ENCODE measurements at regions of chr19 and their contacts with region 1.

Region 1: GRCh38 chr19:48271531-48272151 is 1.8 kb downstream of the ZNF114 start:
- DNase-seq: peak; percentile 66 to 75
- H3K4me3 ChIP-seq: peak overlapping the region; percentile 79
- H3K27ac ChIP-seq: peak overlapping the region; percentile 99
- H3K4me1 ChIP-seq: peaks cover 25% of the 10 kb centered on the region
- H3K27me3 ChIP-seq: no peaks in the 10 kb centered on the region
- CTCF ChIP-seq: no peak

Region 2: DNA sequence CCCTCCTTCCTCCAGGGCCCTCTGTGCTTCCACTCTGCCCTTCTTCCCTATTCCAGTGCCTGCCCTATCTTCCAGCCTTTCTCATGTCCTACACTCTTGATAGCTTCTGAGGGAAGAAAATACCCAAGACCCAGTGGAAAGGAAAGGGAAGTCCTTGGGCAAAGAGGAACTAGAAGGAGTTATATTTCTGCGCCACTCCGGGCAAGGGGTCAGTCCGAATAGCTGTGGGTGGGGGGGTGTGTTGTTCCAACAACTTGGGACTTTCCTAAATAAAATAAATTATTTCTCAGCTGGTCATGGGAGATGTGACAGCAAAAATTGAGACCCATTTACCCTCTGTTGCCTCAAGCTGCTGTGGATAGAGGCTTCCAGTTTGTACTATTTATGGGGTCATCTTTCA is 251.0 kb before region 1 on chr19:
- CTCF ChIA-PET with region 1: interaction called, 16 read pairs
- POLR2A ChIA-PET with region 1: no interaction called
- intact Hi-C with region 1: no loop called
- DNase-seq: no peak
- H3K4me3 ChIP-seq: no peak overlapping the region
- H3K27ac ChIP-seq: no peak overlapping the region
- H3K4me1 ChIP-seq: no peaks in the 10 kb centered on the region
- H3K27me3 ChIP-seq: peaks cover 88% of the 10 kb centered on the region
- CTCF ChIP-seq: no peak

Region 3: GRCh38 chr19:48064509-48064908 is 207.1 kb before region 1 on chr19:
- CTCF ChIA-PET with region 1: no interaction called
- POLR2A ChIA-PET with region 1: no interaction called
- intact Hi-C with region 1: no loop called
- DNase-seq: no peak
- H3K4me3 ChIP-seq: no peak overlapping the region
- H3K27ac ChIP-seq: no peak overlapping the region
- H3K4me1 ChIP-seq: no peaks in the 10 kb centered on the region
- H3K27me3 ChIP-seq: peaks cover 86% of the 10 kb centered on the region
- CTCF ChIP-seq: no peak

Region 4: DNA sequence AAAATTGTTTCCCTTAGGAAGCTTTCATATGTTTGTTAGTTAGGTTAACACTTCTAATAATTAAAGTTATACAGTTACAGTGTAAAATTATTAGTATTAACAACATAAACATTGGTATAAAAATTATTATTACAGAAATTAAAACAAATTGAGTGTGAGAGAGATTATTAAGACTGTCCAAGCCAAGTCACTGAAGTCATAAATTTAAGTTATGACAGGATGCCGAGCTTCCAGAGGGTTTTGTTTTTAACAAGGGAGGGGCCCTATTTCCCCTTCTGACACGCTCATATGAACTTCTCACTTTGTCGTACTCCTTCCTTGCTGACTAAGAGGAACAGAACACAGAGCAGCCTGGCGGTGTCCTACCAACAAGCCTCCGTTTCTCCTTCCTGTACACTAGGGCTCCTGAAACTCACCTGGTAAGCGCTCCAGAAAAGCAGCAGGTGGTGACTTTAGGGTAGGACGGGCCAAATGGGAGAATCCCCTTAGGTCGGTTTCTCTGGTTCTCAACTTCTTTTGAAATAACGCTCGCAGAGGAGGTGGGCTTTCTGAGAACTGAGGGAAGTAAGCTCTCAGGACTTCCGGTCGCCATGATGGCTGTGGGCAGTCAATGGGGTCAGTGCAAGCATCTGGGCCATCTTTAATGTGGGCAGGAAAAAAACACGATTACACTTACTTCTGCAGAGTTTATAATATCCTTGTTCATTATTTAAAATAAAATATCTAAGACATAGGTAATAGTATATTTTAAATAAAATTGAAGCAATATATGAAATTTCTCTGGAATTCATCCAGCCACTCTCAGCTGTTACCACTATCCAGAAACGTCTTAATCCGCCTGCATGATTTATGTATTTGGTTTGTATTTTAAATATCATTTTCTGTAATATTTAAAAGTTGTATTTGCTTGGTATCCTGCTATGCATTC is 16.0 kb before region 1 on chr19 and contains the start of gene CARD8:
- CTCF ChIA-PET with region 1: no interaction called
- POLR2A ChIA-PET with region 1: no interaction called
- intact Hi-C with region 1: no loop called
- DNase-seq: peak; percentile 72 to 82
- H3K4me3 ChIP-seq: peak within 1 kb of the TSS; percentile 65
- H3K27ac ChIP-seq: peak within 1 kb of the TSS; percentile 93
- H3K4me1 ChIP-seq: peaks cover 32% of the 10 kb centered on the region
- H3K27me3 ChIP-seq: no peaks in the 10 kb centered on the region
- CTCF ChIP-seq: no peak
- total RNA-seq, gene CARD8: 17.7 and 25.6 TPM in 2 replicates

Region 5: DNA sequence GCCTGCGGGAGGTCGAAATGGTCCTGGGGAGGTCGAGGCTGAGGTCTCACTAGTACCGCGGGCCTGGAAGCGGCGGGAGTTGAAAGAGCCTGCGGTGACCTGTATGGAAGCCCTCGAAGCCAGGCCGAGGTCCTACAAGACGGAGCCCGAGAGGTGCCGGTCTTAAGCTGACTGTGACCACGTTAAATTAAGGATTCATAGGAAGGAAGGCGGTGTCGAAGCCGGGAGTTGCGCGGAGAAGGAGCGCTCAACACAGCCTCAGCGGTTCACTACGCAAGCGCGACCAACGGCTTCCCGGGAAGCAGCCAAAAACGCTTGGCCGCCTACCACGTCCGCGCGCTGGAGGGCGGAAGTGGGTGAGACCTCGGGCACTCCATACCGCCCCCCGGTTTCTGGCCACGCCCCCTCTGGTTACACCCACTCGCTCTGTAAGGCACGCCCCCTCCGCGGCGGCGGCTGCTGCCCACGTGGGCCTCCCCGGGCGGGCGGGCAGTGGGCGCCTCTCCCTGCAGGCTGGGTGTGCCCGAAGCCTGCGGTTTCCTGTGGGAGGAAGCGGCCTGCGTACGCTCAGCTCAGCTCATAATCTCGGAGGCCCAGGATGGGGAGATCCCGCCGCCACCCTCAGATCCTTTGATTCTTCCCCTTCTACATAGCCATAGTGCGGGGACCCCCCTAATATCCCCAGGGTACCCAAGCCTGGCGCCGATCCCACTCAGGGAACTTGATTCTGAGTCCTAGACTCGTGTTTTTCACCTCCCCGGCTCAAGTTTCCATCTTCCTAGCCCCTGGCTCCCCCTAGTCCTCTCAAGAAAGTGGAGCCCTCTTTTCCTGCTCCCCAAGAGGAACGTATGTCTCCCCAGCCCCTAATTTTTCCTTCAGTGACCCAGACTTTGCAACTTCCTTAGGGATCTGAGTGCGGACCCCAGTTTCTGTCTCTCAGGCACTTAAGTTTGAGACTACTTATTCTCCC is 50.3 kb after region 1 on chr19:
- CTCF ChIA-PET with region 1: interaction called, 15 read pairs
- POLR2A ChIA-PET with region 1: interaction called, 7 read pairs
- intact Hi-C with region 1: loop called (anchors 2 kb)
- DNase-seq: peak; percentile 91 to 100
- H3K4me3 ChIP-seq: peak overlapping the region; percentile 83
- H3K27ac ChIP-seq: peak overlapping the region; percentile 90
- H3K4me1 ChIP-seq: peaks cover 53% of the 10 kb centered on the region
- H3K27me3 ChIP-seq: no peaks in the 10 kb centered on the region
- CTCF ChIP-seq: 0 out of 2 replicates have a peak, but pooled peaks have one; percentile 32

Region 6: GRCh38 chr19:48391107-48391986 is 119.7 kb after region 1 on chr19 and contains the start of gene KDELR1:
- CTCF ChIA-PET with region 1: no interaction called
- POLR2A ChIA-PET with region 1: interaction called, 5 read pairs
- intact Hi-C with region 1: loop called (anchors 1 kb)
- DNase-seq: peak in 1 of 2 experiments; percentile 82
- H3K4me3 ChIP-seq: peak within 1 kb of the TSS; percentile 91
- H3K27ac ChIP-seq: peak within 1 kb of the TSS; percentile 58
- H3K4me1 ChIP-seq: no peaks in the 10 kb centered on the region
- H3K27me3 ChIP-seq: peaks cover 11% of the 10 kb centered on the region
- CTCF ChIP-seq: peak; percentile 95
- total RNA-seq, gene KDELR1: 220 and 261 TPM in 2 replicates

Region 7: DNA sequence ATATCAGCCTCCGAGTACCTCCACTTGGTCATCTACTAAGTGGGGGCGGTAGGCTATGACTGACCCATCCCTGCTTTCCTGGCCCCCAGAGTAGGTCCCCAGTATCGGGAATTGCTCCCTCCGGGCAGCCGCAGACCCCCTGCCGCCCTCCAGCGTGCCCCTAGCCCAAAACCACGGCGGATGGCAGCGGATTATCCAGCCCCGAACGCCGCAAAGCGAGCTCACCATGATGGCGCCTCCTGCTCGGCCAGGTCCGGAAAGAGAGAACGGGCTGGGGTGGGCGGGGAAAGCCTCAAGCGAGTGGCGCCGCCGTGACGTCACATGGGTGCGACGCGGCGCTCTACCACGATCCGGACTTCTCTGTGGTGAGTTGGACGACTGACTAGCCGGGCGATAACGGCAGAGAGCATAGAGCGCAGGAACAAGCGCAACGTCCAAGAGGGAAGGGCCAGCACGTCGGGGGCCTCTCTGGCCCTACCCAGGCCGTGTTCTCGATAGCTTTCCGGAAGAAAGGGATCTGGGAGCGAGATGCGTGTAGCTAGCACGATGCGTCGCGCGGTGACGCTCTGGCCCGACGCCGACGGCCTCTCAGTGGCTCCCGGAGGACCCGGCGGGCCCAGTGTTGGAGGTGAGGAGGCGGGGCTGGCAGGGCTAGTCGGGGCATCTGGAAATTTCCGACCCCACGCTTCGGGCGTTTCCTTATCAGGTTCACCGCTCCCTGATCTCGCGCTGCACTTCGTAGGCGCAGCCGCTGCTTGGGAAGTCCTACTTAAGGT is 347.5 kb after region 1 on chr19 and contains the starts of genes RPL18 and SPHK2:
- CTCF ChIA-PET with region 1: no interaction called
- POLR2A ChIA-PET with region 1: interaction called, 17 read pairs
- intact Hi-C with region 1: no loop called
- DNase-seq: peak; percentile 97 to 99
- H3K4me3 ChIP-seq: peak within 1 kb of the TSS; percentile 92
- H3K27ac ChIP-seq: peak within 1 kb of the TSS; percentile 91
- H3K4me1 ChIP-seq: peaks cover 42% of the 10 kb centered on the region
- H3K27me3 ChIP-seq: no peaks in the 10 kb centered on the region
- CTCF ChIP-seq: no peak
- total RNA-seq, gene RPL18: 1,618 and 1,710 TPM in 2 replicates
- total RNA-seq, gene SPHK2: 18.4 and 20.0 TPM in 2 replicates

Region 8: GRCh38 chr19:49481020-49481683 is 1209.5 kb after region 1 on chr19:
- CTCF ChIA-PET with region 1: no interaction called
- POLR2A ChIA-PET with region 1: interaction called, 31 read pairs
- intact Hi-C with region 1: no loop called
- DNase-seq: no peak
- H3K4me3 ChIP-seq: no peak overlapping the region
- H3K27ac ChIP-seq: no peak overlapping the region
- H3K4me1 ChIP-seq: peaks cover 3% of the 10 kb centered on the region
- H3K27me3 ChIP-seq: no peaks in the 10 kb centered on the region
- CTCF ChIP-seq: no peak

Measured in PC-9 (cell line).